ENCODE measurements at regions of chr2 and their contacts with region 1.

Region 1: DNA sequence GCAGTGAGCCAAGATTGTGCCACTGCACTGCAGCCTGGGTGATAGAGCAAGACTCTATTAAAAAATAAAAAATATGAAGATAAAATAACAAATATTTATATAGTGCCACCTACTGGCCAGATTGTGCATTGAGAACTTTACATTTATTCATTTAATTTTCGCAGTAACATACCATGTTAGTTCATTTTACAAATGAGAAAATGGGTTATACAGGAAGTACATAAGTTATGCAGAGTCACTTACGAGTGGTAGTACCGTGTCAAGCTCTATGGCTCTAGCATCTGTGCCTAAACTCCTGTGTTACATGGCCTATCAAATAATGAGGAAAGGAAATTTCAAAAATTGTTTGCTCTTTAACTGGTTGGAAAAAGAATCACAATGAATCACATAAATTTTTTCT is 27.9 kb downstream of the RIF1 start:
- DNase-seq: no peak
- ATAC-seq: peak; percentile 42
- H3K4me3 Mint-ChIP-seq: no peak overlapping the region
- H3K27ac Mint-ChIP-seq: peak overlapping the region; percentile 36
- H3K4me1 Mint-ChIP-seq: peaks cover 4% of the 10 kb centered on the region
- H3K27me3 Mint-ChIP-seq: no peaks in the 10 kb centered on the region
- CTCF ChIP-seq: peak; percentile 90

Region 2: GRCh38 chr2:151251012-151251411 is 186.6 kb before region 1 on chr2:
- CTCF ChIA-PET with region 1: no interaction called
- POLR2A ChIA-PET with region 1: no interaction called
- intact Hi-C with region 1: no loop called
- DNase-seq: no peak
- ATAC-seq: no peak
- H3K4me3 Mint-ChIP-seq: no peak overlapping the region
- H3K27ac Mint-ChIP-seq: no peak overlapping the region
- H3K4me1 Mint-ChIP-seq: peaks cover 5% of the 10 kb centered on the region
- H3K27me3 Mint-ChIP-seq: no peaks in the 10 kb centered on the region
- CTCF ChIP-seq: no peak

Region 3: DNA sequence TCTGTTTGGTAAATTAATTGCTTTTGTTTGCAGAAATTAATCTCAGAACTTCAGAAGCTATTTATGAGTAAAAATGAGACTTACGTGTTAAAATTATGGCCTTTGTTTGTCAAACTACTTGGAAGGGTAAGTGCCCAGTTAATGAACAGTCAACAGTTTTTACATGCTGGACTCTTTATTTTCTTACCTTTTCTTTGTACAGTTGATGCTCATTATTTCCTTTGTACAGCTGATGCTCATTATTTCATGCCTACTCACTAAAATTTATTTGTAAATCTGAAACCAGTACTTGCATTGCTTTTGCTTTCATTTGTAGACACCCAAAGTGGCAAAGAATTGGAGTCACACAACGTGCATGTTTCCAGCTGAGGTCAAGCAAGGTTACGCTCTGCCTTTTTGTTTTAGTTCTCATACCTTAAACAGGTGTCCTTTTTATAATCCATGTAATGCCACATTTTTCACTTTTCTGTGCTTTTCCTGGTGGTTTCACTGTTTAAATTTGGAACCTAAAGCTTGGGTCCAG is 14.7 kb before region 1 on chr2:
- CTCF ChIA-PET with region 1: interaction called, 26 read pairs
- POLR2A ChIA-PET with region 1: interaction called, 4 read pairs
- intact Hi-C with region 1: no loop called
- DNase-seq: no peak
- ATAC-seq: peak; percentile 60
- H3K4me3 Mint-ChIP-seq: no peak overlapping the region
- H3K27ac Mint-ChIP-seq: peak overlapping the region; percentile 80
- H3K4me1 Mint-ChIP-seq: peaks cover 33% of the 10 kb centered on the region
- H3K27me3 Mint-ChIP-seq: no peaks in the 10 kb centered on the region
- CTCF ChIP-seq: no peak

Measured in activated CD8-positive, alpha-beta T cell treated with anti-CD3 and anti-CD28 coated beads for 36 hours (primary cell).